ENCODE measurements at regions of chr5 and their contacts with region 1.

Region 1: DNA sequence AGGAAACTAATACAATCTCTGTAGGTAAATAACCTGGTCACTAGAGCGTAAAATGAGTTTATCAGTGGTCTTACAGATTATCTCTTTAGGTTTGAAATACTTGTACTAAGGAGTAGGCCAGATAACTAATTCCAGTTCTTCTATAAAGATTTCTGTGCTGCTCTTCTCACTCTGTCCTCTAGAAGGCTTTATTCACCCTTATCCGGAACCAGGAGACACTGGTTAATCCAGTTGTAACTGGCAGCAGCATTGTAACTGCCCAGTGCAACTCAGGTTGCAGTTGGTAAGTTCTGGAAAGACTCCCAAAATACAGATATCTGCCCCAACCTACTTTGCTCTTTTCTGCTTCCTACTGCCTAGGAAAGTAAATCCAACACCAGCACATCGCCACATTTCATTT is 19.8 kb downstream of the C5orf22 start:
- DNase-seq: no peak
- H3K4me3 ChIP-seq: no peak overlapping the region
- H3K27ac ChIP-seq: no peak overlapping the region
- H3K4me1 ChIP-seq: no peaks in the 10 kb centered on the region
- H3K27me3 ChIP-seq: no peaks in the 10 kb centered on the region
- CTCF ChIP-seq: no peak

Region 2: GRCh38 chr5:31537856-31538255 is 14.0 kb before region 1 on chr5:
- CTCF ChIA-PET with region 1: no interaction called
- POLR2A ChIA-PET with region 1: no interaction called
- intact Hi-C with region 1: loop called (anchors 1 kb)
- DNase-seq: peak in 1 of 2 experiments; percentile 22
- H3K4me3 ChIP-seq: no peak overlapping the region
- H3K27ac ChIP-seq: no peak overlapping the region
- H3K4me1 ChIP-seq: peaks cover 11% of the 10 kb centered on the region
- H3K27me3 ChIP-seq: no peaks in the 10 kb centered on the region
- CTCF ChIP-seq: no peak